Heart right ventricle (tissue), 16 donors: ENCODE measurements at regions of chr12 and their contacts with region 1.

Region 1: GRCh38 chr12:26455936-26456574 is 260.7 kb downstream of the SSPN start:
- DNase-seq: no peak
- ATAC-seq: peak in 4 of 8 donors; percentile 39 to 75 (median 56)
- H3K4me3 ChIP-seq: no peak overlapping the region
- H3K27ac ChIP-seq: peak overlapping the region in 7 of 10 donors; percentile 21 to 70 (median 31)
- H3K4me1 ChIP-seq: peaks cover 0 to 43% (median 11%) of the 10 kb centered on the region in 9 donors
- H3K27me3 ChIP-seq: no peaks in the 10 kb centered on the region
- CTCF ChIP-seq: no peak

Region 2: DNA sequence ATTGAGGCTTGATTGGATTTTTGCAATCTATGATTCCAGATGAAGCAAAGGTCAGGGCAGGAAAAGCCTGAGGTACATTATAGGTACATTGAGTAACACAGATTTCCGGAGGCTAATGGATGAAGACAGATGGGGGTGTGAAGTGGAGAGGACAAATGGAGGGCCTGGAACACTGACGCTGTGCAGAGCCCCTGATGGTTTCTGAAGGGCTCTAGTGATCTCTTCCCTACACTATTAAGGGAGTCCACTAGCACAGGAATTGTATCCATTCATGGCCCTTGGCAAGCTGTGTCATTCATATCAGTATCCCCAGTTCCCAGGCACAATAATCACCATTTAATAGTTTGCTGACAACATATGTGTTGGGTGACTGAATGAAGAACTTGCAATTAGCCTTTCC is 92.2 kb after region 1 on chr12:
- intact Hi-C with region 1: loop called in 1 of 10 experiments (anchors 10 kb)
- DNase-seq: no peak
- ATAC-seq: peak in 2 of 8 donors; percentile 47 to 61
- H3K4me3 ChIP-seq: no peak overlapping the region
- H3K27ac ChIP-seq: no peak overlapping the region
- H3K4me1 ChIP-seq: peaks cover 0 to 22% (median 0%) of the 10 kb centered on the region in 9 donors
- H3K27me3 ChIP-seq: no peaks in the 10 kb centered on the region
- CTCF ChIP-seq: no peak